Activated CD8-positive, alpha-beta T cell treated with anti-CD3 and anti-CD28 coated beads for 36 hours (primary cell): ENCODE measurements at regions of chr13 and their contacts with region 1.

Region 1: GRCh38 chr13:99269627-99270241 is 11.6 kb upstream of the GPR18 start:
- DNase-seq: peak; percentile 38
- ATAC-seq: peak; percentile 60
- H3K4me3 Mint-ChIP-seq: no peak overlapping the region
- H3K27ac Mint-ChIP-seq: peak overlapping the region; percentile 69
- H3K4me1 Mint-ChIP-seq: peaks cover 65% of the 10 kb centered on the region
- H3K27me3 Mint-ChIP-seq: no peaks in the 10 kb centered on the region
- CTCF ChIP-seq: peak; percentile 85

Region 2: GRCh38 chr13:98731925-98732324 is 537.8 kb before region 1 on chr13:
- CTCF ChIA-PET with region 1: no interaction called
- POLR2A ChIA-PET with region 1: no interaction called
- intact Hi-C with region 1: no loop called
- DNase-seq: no peak
- ATAC-seq: no peak
- H3K4me3 Mint-ChIP-seq: no peak overlapping the region
- H3K27ac Mint-ChIP-seq: no peak overlapping the region
- H3K4me1 Mint-ChIP-seq: peaks cover 5% of the 10 kb centered on the region
- H3K27me3 Mint-ChIP-seq: peaks cover 5% of the 10 kb centered on the region
- CTCF ChIP-seq: no peak

Region 3: GRCh38 chr13:99087096-99087953 is 182.4 kb before region 1 on chr13:
- CTCF ChIA-PET with region 1: interaction called, 6 read pairs
- POLR2A ChIA-PET with region 1: interaction called, 3 read pairs
- intact Hi-C with region 1: loop called (anchors 5 kb)
- DNase-seq: peak; percentile 93
- ATAC-seq: peak; percentile 88
- H3K4me3 Mint-ChIP-seq: peak overlapping the region; percentile 89
- H3K27ac Mint-ChIP-seq: peak overlapping the region; percentile 93
- H3K4me1 Mint-ChIP-seq: peaks cover 33% of the 10 kb centered on the region
- H3K27me3 Mint-ChIP-seq: no peaks in the 10 kb centered on the region
- CTCF ChIP-seq: peak; percentile 59

Region 4: DNA sequence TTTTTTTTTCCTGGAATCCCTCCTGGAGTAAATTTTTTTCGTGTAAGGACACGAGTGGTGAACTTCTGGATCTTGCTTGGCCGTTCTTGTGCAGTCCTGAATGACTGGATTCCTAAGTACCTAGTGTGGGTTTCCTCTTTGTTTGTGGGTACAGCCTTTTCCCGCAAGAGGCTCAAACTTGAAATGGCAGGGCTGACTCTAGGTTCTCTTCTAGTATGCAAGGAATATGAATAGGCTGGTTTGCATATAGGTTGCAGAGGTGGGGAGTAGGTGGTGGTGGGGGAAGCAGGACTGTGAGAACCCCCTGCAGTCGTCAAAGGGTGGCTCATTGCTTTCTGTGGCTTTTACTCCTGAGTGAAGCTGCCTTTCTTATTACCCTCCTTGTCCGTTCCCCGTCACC is 55.5 kb before region 1 on chr13:
- CTCF ChIA-PET with region 1: interaction called, 31 read pairs
- POLR2A ChIA-PET with region 1: no interaction called
- intact Hi-C with region 1: no loop called
- DNase-seq: peak; percentile 84
- ATAC-seq: peak; percentile 72
- H3K4me3 Mint-ChIP-seq: peak overlapping the region; percentile 74
- H3K27ac Mint-ChIP-seq: peak overlapping the region; percentile 91
- H3K4me1 Mint-ChIP-seq: peaks cover 80% of the 10 kb centered on the region
- H3K27me3 Mint-ChIP-seq: no peaks in the 10 kb centered on the region
- CTCF ChIP-seq: no peak

Region 5: GRCh38 chr13:99296398-99296797 is 26.7 kb after region 1 on chr13:
- CTCF ChIA-PET with region 1: interaction called, 22 read pairs
- POLR2A ChIA-PET with region 1: interaction called, 3 read pairs
- intact Hi-C with region 1: loop called (anchors 1 kb)
- DNase-seq: peak; percentile 41
- ATAC-seq: peak; percentile 76
- H3K4me3 Mint-ChIP-seq: peak overlapping the region; percentile 58
- H3K27ac Mint-ChIP-seq: peak overlapping the region; percentile 89
- H3K4me1 Mint-ChIP-seq: peaks cover 74% of the 10 kb centered on the region
- H3K27me3 Mint-ChIP-seq: no peaks in the 10 kb centered on the region
- CTCF ChIP-seq: no peak

Region 6: GRCh38 chr13:99339736-99340397 is 70.1 kb after region 1 on chr13:
- CTCF ChIA-PET with region 1: interaction called, 16 read pairs
- POLR2A ChIA-PET with region 1: no interaction called
- intact Hi-C with region 1: no loop called
- DNase-seq: peak; percentile 61
- ATAC-seq: peak; percentile 57
- H3K4me3 Mint-ChIP-seq: no peak overlapping the region
- H3K27ac Mint-ChIP-seq: peak overlapping the region; percentile 17
- H3K4me1 Mint-ChIP-seq: peaks cover 63% of the 10 kb centered on the region
- H3K27me3 Mint-ChIP-seq: no peaks in the 10 kb centered on the region
- CTCF ChIP-seq: no peak

Region 7: GRCh38 chr13:99380921-99381645 is 111.3 kb after region 1 on chr13:
- CTCF ChIA-PET with region 1: interaction called, 280 read pairs
- POLR2A ChIA-PET with region 1: interaction called, 3 read pairs
- intact Hi-C with region 1: loop called (anchors 1 kb)
- DNase-seq: peak; percentile 90
- ATAC-seq: peak; percentile 68
- H3K4me3 Mint-ChIP-seq: no peak overlapping the region
- H3K27ac Mint-ChIP-seq: peak overlapping the region; percentile 86
- H3K4me1 Mint-ChIP-seq: peaks cover 89% of the 10 kb centered on the region
- H3K27me3 Mint-ChIP-seq: no peaks in the 10 kb centered on the region
- CTCF ChIP-seq: no peak

Region 8: DNA sequence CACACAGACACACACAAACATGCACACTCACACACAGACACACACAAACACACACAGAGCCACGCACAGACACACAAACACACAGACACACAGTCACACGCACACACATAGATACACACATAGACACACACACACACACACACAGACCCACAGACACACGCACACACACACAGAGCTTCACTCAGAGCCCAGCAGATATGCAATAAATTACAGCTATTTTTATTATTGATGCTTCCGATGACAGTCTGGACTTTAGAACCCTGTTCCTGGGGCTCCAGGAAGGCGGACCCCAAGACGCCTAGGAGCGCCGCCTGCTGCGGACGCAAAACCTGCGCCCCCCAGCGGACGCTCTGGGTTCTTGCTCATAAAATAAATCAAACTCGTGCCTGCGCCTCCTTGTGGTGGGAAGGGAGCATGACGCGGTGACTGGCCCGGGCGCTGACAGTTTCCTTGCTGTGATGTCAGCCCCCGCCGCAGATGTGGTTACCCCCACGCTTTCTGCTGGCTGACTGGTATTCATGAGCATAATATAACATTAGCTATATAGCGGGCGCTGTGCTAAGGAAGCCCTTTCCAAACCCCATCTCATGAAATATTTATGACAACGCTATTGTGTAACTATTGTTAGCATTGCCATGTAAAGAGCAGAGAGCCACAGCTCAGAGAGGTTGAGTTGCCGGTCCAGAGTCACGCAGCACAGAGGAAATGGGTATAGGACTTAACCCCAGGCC is 167.1 kb after region 1 on chr13:
- CTCF ChIA-PET with region 1: interaction called, 256 read pairs
- POLR2A ChIA-PET with region 1: interaction called, 13 read pairs
- intact Hi-C with region 1: loop called (anchors 2 kb)
- DNase-seq: peak; percentile 99
- ATAC-seq: peak; percentile 47
- H3K4me3 Mint-ChIP-seq: peak overlapping the region; percentile 19
- H3K27ac Mint-ChIP-seq: peak overlapping the region; percentile 80
- H3K4me1 Mint-ChIP-seq: peaks cover 56% of the 10 kb centered on the region
- H3K27me3 Mint-ChIP-seq: peaks cover 2% of the 10 kb centered on the region
- CTCF ChIP-seq: peak; percentile 100